Activated CD4-positive, alpha-beta T cell treated with anti-CD3 and anti-CD28 coated beads for 36 hours (primary cell): ENCODE measurements at regions of chr12 and their contacts with region 1.

Region 1: DNA sequence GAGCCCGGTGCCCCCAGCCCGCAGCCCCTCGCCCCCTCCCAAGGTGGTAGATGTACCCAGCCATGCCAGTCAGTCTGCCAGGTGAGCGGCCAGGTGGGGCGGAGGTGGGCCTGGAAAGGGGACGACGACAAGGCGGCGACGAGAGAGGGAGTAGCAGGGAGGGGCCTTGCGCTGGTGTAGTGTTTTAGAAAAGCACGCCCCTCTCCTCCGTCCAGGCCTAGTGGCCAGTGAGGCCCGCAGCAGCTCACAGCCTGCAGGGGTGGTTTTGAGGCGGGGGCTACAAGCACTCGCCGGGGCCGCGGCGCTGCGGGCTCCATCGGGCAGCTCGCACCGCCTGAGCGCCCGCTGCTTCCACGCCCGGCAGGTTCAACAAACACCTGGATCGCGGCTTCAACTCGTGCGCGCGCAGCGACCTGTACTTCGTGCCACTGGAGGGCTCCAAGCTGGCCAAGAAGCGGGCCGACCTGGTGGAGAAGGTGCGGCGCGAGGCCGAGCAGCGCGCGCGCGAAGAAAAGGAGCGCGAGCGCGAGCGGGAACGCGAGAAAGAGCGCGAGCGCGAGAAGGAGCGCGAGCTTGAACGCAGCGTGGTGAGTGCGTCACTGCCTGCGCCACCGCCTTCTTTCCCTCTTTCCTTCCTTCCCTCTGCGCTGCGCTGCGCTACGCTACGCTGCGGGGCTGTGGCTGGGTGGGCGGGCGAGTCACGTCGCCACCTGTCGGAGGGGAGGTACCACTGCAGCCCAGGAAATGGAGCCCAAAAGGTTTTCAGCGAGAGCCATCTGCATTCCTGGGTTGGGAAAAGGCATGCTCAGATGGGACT is 5.9 kb upstream of the RNU7-1 start:
- DNase-seq: peak; percentile 97
- ATAC-seq: peak; percentile 93
- H3K4me3 Mint-ChIP-seq: peak overlapping the region; percentile 83
- H3K27ac Mint-ChIP-seq: peak overlapping the region; percentile 96
- H3K4me1 Mint-ChIP-seq: peaks cover 52% of the 10 kb centered on the region
- H3K27me3 Mint-ChIP-seq: no peaks in the 10 kb centered on the region

Region 2: GRCh38 chr12:6904280-6905278 is 33.1 kb before region 1 on chr12 and contains the start of gene LRRC23:
- CTCF ChIA-PET with region 1: interaction called, 5 read pairs
- POLR2A ChIA-PET with region 1: no interaction called
- intact Hi-C with region 1: loop called in 1 of 2 experiments (anchors 2 kb)
- DNase-seq: peak; percentile 99
- ATAC-seq: peak; percentile 97
- H3K4me3 Mint-ChIP-seq: no peak within 1 kb of the TSS
- H3K27ac Mint-ChIP-seq: no peak within 1 kb of the TSS
- H3K4me1 Mint-ChIP-seq: peaks cover 14% of the 10 kb centered on the region
- H3K27me3 Mint-ChIP-seq: no peaks in the 10 kb centered on the region
- total RNA-seq, gene LRRC23: 6.4 to 7.0 TPM

Region 3: GRCh38 chr12:6914246-6914946 is 23.3 kb before region 1 on chr12 and contains the start of gene ENO2:
- CTCF ChIA-PET with region 1: interaction called, 6 read pairs
- POLR2A ChIA-PET with region 1: interaction called, 3 read pairs
- intact Hi-C with region 1: loop called in 1 of 2 experiments (anchors 1 kb)
- DNase-seq: peak; percentile 92
- ATAC-seq: peak; percentile 92
- H3K4me3 Mint-ChIP-seq: peak within 1 kb of the TSS; percentile 98
- H3K27ac Mint-ChIP-seq: peak within 1 kb of the TSS; percentile 80
- H3K4me1 Mint-ChIP-seq: peaks cover 35% of the 10 kb centered on the region
- H3K27me3 Mint-ChIP-seq: no peaks in the 10 kb centered on the region
- total RNA-seq, gene ENO2: 301 to 317 TPM